ENCODE measurements at regions of chr1 and their contacts with region 1.

Region 1: GRCh38 chr1:151156515-151156819 is at the start of gene TNFAIP8L2:
- DNase-seq: peak in 1 of 2 donors; percentile 53
- ATAC-seq: peak; percentile 39 to 71 (median 58)
- H3K4me3 ChIP-seq: peak within 1 kb of the TSS in 7 of 10 donors; percentile 8 to 58 (median 32)
- H3K27ac ChIP-seq: peak within 1 kb of the TSS in 5 of 10 donors; percentile 13 to 90 (median 48)
- H3K4me1 ChIP-seq: peaks cover 0 to 45% (median 5%) of the 10 kb centered on the region in 9 donors
- H3K27me3 ChIP-seq: no peaks in the 10 kb centered on the region
- CTCF ChIP-seq: no peak
- total RNA-seq, gene TNFAIP8L2: 0.35 to 5.8 (median 0.71) TPM in 9 of 10 donors, not detected in the other

Region 2: GRCh38 chr1:150561974-150562445 is 594.5 kb before region 1 on chr1:
- intact Hi-C with region 1: no loop called
- DNase-seq: peak; percentile 94 to 95
- ATAC-seq: peak; percentile 80 to 91 (median 88)
- H3K4me3 ChIP-seq: peak overlapping the region; percentile 43 to 64 (median 58)
- H3K27ac ChIP-seq: peak overlapping the region; percentile 91 to 100 (median 100)
- H3K4me1 ChIP-seq: peaks cover 50 to 88% (median 78%) of the 10 kb centered on the region in 9 donors
- H3K27me3 ChIP-seq: no peaks in the 10 kb centered on the region
- CTCF ChIP-seq: no peak

Region 3: DNA sequence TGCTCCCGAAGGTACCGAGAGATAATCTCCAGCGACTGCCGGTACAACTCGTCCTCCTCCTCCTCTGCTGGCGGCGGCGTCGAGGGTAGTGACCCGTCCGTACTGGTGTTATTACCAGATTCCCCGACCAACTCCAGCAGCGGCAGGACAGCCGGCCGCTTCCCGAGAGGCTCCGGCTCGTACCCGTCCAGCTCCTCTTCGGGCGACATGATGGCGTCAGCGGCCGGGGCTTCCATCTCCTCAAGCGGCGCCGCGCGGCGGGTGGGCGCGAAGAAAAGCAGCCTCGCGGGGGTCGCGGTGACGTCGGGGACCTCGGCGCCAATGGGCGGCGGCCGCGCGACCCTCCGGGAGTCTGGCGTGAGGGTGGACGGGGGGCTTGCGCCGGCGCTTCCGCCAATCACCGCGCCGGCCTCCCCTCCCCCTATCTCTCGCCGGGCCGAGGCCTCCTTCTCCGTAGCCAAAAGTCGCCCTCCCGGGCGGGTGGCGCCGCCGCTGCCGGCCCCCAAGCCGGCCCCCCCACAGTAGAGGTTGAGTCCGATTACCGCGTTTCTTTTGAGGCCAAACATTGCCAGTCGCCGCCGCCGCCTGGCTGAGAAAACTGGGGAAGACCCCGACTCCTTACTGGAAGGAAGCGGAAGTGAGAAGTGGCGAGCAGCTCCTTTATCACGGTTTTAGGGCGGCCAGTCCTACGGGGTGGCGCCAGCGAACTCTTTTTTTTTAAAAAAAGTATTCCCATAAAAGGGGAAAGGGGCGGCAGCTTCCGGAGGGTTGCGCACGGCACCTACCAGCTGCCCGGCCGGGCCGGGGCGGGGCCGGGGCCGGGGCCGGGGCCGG is 577.3 kb before region 1 on chr1 and contains the start of gene MCL1:
- intact Hi-C with region 1: no loop called
- DNase-seq: peak; percentile 93 to 96
- ATAC-seq: peak; percentile 87 to 95 (median 90)
- H3K4me3 ChIP-seq: peak within 1 kb of the TSS; percentile 82 to 99 (median 96)
- H3K27ac ChIP-seq: peak within 1 kb of the TSS; percentile 91 to 100 (median 100)
- H3K4me1 ChIP-seq: peaks cover 0 to 46% (median 30%) of the 10 kb centered on the region in 9 donors
- H3K27me3 ChIP-seq: no peaks in the 10 kb centered on the region
- CTCF ChIP-seq: peak in 2 of 9 donors; percentile 16 to 19
- total RNA-seq, gene MCL1: 76.4 to 155 (median 122) TPM

Region 4: GRCh38 chr1:151098126-151098525 is 58.3 kb before region 1 on chr1:
- intact Hi-C with region 1: loop called in 9 of 10 experiments (anchors 1 to 5 kb)
- DNase-seq: no peak
- ATAC-seq: no peak
- H3K4me3 ChIP-seq: no peak overlapping the region
- H3K27ac ChIP-seq: no peak overlapping the region
- H3K4me1 ChIP-seq: no peaks in the 10 kb centered on the region
- H3K27me3 ChIP-seq: no peaks in the 10 kb centered on the region
- CTCF ChIP-seq: no peak

Region 5: DNA sequence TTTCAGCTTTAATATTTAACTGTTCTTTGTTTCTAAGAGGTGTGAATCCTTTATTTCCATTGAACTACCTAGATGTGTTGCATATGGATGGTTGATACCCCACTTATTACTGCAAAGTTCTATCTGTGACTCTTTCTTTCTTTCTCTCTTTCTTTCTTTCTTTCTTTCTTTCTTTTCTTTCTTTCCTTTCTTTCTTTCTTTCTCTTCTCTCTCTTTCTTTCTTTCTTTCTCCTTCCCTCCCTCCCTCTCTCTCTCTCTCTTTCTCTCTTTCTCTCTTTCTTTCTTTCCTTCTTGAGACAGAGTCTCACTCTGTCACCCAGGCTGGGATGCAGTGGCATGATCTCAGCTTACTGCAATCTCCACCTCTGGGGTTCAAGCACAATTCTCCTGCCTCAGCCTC is 51.8 kb before region 1 on chr1:
- intact Hi-C with region 1: loop called in 9 of 10 experiments (anchors 1 to 5 kb)
- DNase-seq: no peak
- ATAC-seq: no peak
- H3K4me3 ChIP-seq: no peak overlapping the region
- H3K27ac ChIP-seq: no peak overlapping the region
- H3K4me1 ChIP-seq: no peaks in the 10 kb centered on the region
- H3K27me3 ChIP-seq: no peaks in the 10 kb centered on the region
- CTCF ChIP-seq: no peak

Region 6: DNA sequence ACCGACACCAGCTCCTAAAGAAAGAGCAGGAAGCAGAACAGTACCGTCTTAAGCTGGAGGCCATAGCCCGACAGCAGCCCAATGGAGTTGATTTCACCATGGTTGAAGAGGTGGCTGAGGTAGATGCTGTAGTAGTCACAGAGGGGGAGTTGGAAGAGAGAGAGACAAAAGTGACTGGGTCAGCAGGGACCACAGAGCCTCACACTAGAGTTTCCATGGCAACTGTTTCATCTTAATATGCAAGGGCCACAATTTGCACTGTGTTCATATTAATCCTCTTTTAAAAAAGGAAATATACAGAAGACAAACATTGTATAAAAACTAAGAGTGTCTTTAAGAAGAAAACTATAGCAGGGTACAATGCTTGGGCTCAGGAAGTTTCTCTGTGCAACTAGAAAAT is 38.4 kb before region 1 on chr1:
- intact Hi-C with region 1: no loop called
- DNase-seq: no peak
- ATAC-seq: no peak
- H3K4me3 ChIP-seq: no peak overlapping the region
- H3K27ac ChIP-seq: no peak overlapping the region
- H3K4me1 ChIP-seq: no peaks in the 10 kb centered on the region
- H3K27me3 ChIP-seq: no peaks in the 10 kb centered on the region
- CTCF ChIP-seq: no peak